ENCODE measurements at regions of chr4 and their contacts with region 1.

Region 1: GRCh38 chr4:1122505-1122904 is 9.1 kb upstream of the RNF212 start:
- DNase-seq: no peak
- ATAC-seq: no peak
- H3K4me3 Mint-ChIP-seq: no peak overlapping the region
- H3K27ac Mint-ChIP-seq: no peak overlapping the region
- H3K4me1 Mint-ChIP-seq: no peaks in the 10 kb centered on the region
- H3K27me3 Mint-ChIP-seq: peaks cover 9% of the 10 kb centered on the region
- CTCF ChIP-seq: no peak

Region 2: GRCh38 chr4:1072830-1073446 is 49.6 kb before region 1 on chr4:
- CTCF ChIA-PET with region 1: no interaction called
- POLR2A ChIA-PET with region 1: no interaction called
- intact Hi-C with region 1: loop called (anchors 5 kb)
- DNase-seq: no peak
- ATAC-seq: peak; percentile 79
- H3K4me3 Mint-ChIP-seq: no peak overlapping the region
- H3K27ac Mint-ChIP-seq: no peak overlapping the region
- H3K4me1 Mint-ChIP-seq: peaks cover 12% of the 10 kb centered on the region
- H3K27me3 Mint-ChIP-seq: peaks cover 19% of the 10 kb centered on the region
- CTCF ChIP-seq: peak; percentile 8

Measured in activated B cell treated with CpG ODN at 0.5 μM for 24 hours (primary cell).